ENCODE measurements at regions of chr6 and their contacts with region 1.

Region 1: GRCh38 chr6:39792540-39793450 is 619 bp downstream of the DAAM2 start:
- DNase-seq: no peak
- H3K4me3 ChIP-seq: peak overlapping the region; percentile 70
- H3K27me3 ChIP-seq: no peaks in the 10 kb centered on the region
- CTCF ChIP-seq: 0 out of 2 replicates have a peak, but pooled peaks have one; percentile 5

Region 2: GRCh38 chr6:39476151-39476550 is 316.6 kb before region 1 on chr6:
- CTCF ChIA-PET with region 1: no interaction called
- POLR2A ChIA-PET with region 1: interaction called, 21 read pairs
- DNase-seq: peak; percentile 16
- H3K4me3 ChIP-seq: no peak overlapping the region
- H3K27me3 ChIP-seq: no peaks in the 10 kb centered on the region
- CTCF ChIP-seq: no peak

Measured in BJ (cell line).